ENCODE measurements at regions of chr13 and their contacts with region 1.

Region 1: DNA sequence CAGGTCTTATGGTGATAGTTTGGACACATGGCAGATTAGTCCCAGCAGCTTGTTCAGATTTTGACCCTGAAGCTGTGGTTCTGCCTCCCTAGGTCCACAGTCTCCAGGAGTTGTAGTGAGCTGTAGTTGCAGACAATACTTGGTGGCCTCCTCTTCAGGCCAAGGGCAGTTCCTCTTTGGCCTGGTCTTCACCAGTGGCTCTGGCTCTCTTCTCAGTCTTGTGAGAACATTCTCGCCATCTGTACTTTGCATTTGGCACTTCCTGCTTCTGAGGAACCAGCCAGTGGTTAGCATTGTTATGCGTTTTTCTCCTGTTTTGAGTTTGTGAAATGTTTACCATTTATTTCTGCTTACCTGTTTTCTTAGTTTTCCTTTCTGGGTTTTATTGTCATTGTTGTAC is 40.7 kb downstream of the PCCA start:
- DNase-seq: peak; percentile 59
- H3K4me3 Mint-ChIP-seq: peak overlapping the region; percentile 8
- H3K27ac Mint-ChIP-seq: peak overlapping the region; percentile 29
- H3K4me1 Mint-ChIP-seq: peaks cover 22% of the 10 kb centered on the region
- H3K27me3 Mint-ChIP-seq: no peaks in the 10 kb centered on the region

Region 2: GRCh38 chr13:100088644-100089464 is 40.8 kb before region 1 on chr13 and contains the start of gene PCCA:
- intact Hi-C with region 1: loop called (anchors 5 kb)
- DNase-seq: peak; percentile 95
- H3K4me3 Mint-ChIP-seq: peak within 1 kb of the TSS; percentile 94
- H3K27ac Mint-ChIP-seq: peak within 1 kb of the TSS; percentile 86
- H3K4me1 Mint-ChIP-seq: peaks cover 18% of the 10 kb centered on the region
- H3K27me3 Mint-ChIP-seq: peaks cover 4% of the 10 kb centered on the region
- total RNA-seq, gene PCCA: 5.8 and 6.4 TPM in 2 replicates

Region 3: GRCh38 chr13:100203696-100204367 is 74.2 kb after region 1 on chr13:
- intact Hi-C with region 1: loop called (anchors 10 kb)
- DNase-seq: no peak
- H3K4me3 Mint-ChIP-seq: peak overlapping the region; percentile 56
- H3K27ac Mint-ChIP-seq: peak overlapping the region; percentile 50
- H3K4me1 Mint-ChIP-seq: peaks cover 8% of the 10 kb centered on the region
- H3K27me3 Mint-ChIP-seq: no peaks in the 10 kb centered on the region

Measured in activated CD4-positive, alpha-beta T cell treated with anti-CD3 and anti-CD28 coated beads, Interleukin-2, amount 10 ng/mL, durations not matched to agents 24 days and 14 days (primary cell).